IMR-90 (cell line): ENCODE measurements at regions of chr19 and their contacts with region 1.

Region 1: DNA sequence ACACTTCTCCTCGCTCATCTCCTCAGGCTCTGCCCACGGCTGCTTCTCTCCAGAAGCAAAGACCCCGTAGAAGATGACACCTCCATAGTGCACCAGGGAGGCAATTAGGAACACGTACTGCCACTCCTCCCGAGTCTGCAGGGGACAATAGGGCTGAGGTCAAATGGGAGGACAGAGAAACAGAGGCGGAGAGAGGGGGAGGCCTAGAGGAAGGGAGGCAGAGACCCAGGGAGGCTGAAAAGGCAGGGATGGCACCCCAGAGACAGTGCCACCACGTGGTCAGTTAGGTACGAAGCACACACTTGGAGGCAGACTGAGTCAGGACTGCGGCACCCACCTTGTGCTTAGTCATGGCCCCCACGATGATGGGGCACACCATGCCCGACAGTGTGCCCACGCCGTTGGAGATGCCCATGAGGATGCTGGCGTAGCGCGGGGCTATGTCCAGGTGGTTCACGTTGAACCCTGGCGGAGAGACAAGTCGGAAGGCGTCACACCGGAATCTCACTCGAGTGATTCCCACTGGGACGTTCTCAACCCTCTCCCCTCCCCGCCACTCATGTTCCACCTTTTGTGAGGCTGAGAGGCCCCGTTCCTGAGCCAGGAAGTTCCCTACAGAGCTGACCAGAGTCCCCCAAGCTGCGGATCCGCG is 5.6 kb downstream of the GFY start:
- DNase-seq: no peak
- ATAC-seq: no peak
- H3K4me3 ChIP-seq: no peak overlapping the region
- H3K27ac ChIP-seq: no peak overlapping the region
- H3K4me1 ChIP-seq: no peaks in the 10 kb centered on the region
- H3K27me3 ChIP-seq: peaks cover 95% of the 10 kb centered on the region
- CTCF ChIP-seq: peak; percentile 17; the same call in 1 of the 2 replicates
- POLR2A ChIP-seq: no peak
- RAD21 ChIP-seq: 0 out of 2 replicates have a peak, but pooled peaks have one; percentile 10

Region 2: GRCh38 chr19:49264258-49264657 is 166.5 kb before region 1 on chr19:
- CTCF ChIA-PET with region 1: no interaction called
- POLR2A ChIA-PET with region 1: no interaction called
- dilution Hi-C with region 1: no loop called
- in situ Hi-C with region 1: loop called (anchors 10 kb)
- intact Hi-C with region 1: no loop called
- DNase-seq: no peak
- ATAC-seq: no peak
- H3K4me3 ChIP-seq: no peak overlapping the region
- H3K27ac ChIP-seq: no peak overlapping the region
- H3K4me1 ChIP-seq: no peaks in the 10 kb centered on the region
- H3K27me3 ChIP-seq: peaks cover 2% of the 10 kb centered on the region
- CTCF ChIP-seq: no peak
- POLR2A ChIP-seq: no peak
- RAD21 ChIP-seq: no peak

Region 3: GRCh38 chr19:49340069-49340864 is 90.5 kb before region 1 on chr19:
- CTCF ChIA-PET with region 1: no interaction called
- POLR2A ChIA-PET with region 1: no interaction called
- dilution Hi-C with region 1: no loop called
- in situ Hi-C with region 1: no loop called
- intact Hi-C with region 1: no loop called
- DNase-seq: no peak
- ATAC-seq: peak; percentile 15; the same call in 1 of the 2 replicates
- H3K4me3 ChIP-seq: no peak overlapping the region
- H3K27ac ChIP-seq: no peak overlapping the region
- H3K4me1 ChIP-seq: no peaks in the 10 kb centered on the region
- H3K27me3 ChIP-seq: no peaks in the 10 kb centered on the region
- CTCF ChIP-seq: no peak
- POLR2A ChIP-seq: no peak
- RAD21 ChIP-seq: no peak